Vagina (tissue), 2 donors: ENCODE measurements at regions of chr6 and their contacts with region 1.

Region 1: GRCh38 chr6:43769526-43770416 is at the start of gene VEGFA:
- DNase-seq: peak in 1 of 2 donors; percentile 95
- H3K4me3 ChIP-seq: peak within 1 kb of the TSS; percentile 66 to 77
- H3K27ac ChIP-seq: peak within 1 kb of the TSS; percentile 89
- H3K4me1 ChIP-seq: peaks cover 34% of the 10 kb centered on the region
- H3K27me3 ChIP-seq: no peaks in the 10 kb centered on the region
- CTCF ChIP-seq: peak; percentile 46 to 97 (median 95)
- POLR2A ChIP-seq: peak; percentile 43 to 93
- total RNA-seq, gene VEGFA: 194 TPM

Region 2: DNA sequence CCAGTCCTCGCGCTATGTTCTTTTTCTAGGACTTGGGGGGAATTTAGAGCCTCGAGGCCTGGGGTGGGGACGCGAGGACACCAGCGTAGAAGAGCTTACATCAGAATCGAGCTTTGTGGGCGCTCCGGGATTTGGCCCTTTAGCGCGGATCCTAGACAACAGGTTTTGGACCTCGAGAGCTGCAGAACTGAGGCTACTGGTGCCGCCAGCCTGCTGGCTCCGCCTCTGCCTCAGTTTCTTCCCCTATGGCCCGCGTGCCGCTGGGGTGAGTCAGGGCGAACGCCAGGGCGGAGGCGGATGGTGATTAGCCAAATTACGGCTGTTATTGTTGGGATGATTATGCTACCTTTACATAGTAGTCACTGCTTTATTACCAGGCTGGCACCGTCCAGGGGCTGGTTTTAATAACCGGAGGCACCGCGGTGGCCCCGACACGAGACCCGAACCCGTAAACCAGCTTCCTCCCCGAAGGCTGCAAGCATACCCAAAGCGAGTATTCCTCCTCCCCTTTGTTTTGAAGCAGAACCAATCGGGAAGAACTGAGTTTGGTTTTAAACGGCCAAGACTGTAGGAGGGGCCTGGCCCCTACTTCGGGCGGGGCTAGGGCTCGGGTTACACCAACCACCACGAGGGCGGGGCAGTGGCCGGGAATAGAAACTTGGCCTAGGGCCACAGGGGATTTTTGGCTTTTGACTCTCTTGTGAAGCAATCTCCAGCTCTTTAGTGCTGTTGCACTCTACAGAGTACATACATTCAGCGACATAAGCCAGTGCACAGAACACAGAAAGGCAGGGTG is 140.1 kb before region 1 on chr6:
- intact Hi-C with region 1: loop called (anchors 5 kb)
- DNase-seq: peak in 1 of 2 donors; percentile 98
- H3K4me3 ChIP-seq: peak overlapping the region; percentile 91 to 94
- H3K27ac ChIP-seq: peak overlapping the region; percentile 99
- H3K4me1 ChIP-seq: peaks cover 28% of the 10 kb centered on the region
- H3K27me3 ChIP-seq: no peaks in the 10 kb centered on the region
- CTCF ChIP-seq: no peak
- POLR2A ChIP-seq: peak in 1 of 2 donors; percentile 86

Region 3: GRCh38 chr6:43667245-43668150 is 102.3 kb before region 1 on chr6:
- intact Hi-C with region 1: loop called (anchors 5 kb)
- DNase-seq: no peak
- H3K4me3 ChIP-seq: peak overlapping the region in 1 of 2 donors; percentile 23
- H3K27ac ChIP-seq: peak overlapping the region; percentile 75
- H3K4me1 ChIP-seq: peaks cover 37% of the 10 kb centered on the region
- H3K27me3 ChIP-seq: no peaks in the 10 kb centered on the region
- CTCF ChIP-seq: peak; percentile 93 to 98 (median 97)
- POLR2A ChIP-seq: no peak

Region 4: GRCh38 chr6:43714311-43715055 is 55.3 kb before region 1 on chr6:
- intact Hi-C with region 1: loop called (anchors 10 kb)
- DNase-seq: peak in 1 of 2 donors; percentile 95
- H3K4me3 ChIP-seq: no peak overlapping the region
- H3K27ac ChIP-seq: peak overlapping the region; percentile 72
- H3K4me1 ChIP-seq: peaks cover 63% of the 10 kb centered on the region
- H3K27me3 ChIP-seq: no peaks in the 10 kb centered on the region
- CTCF ChIP-seq: no peak
- POLR2A ChIP-seq: no peak

Region 5: GRCh38 chr6:43916924-43917877 is 147.4 kb after region 1 on chr6:
- intact Hi-C with region 1: loop called (anchors 10 kb)
- DNase-seq: peak in 1 of 2 donors; percentile 98
- H3K4me3 ChIP-seq: no peak overlapping the region
- H3K27ac ChIP-seq: peak overlapping the region; percentile 53
- H3K4me1 ChIP-seq: peaks cover 22% of the 10 kb centered on the region
- H3K27me3 ChIP-seq: no peaks in the 10 kb centered on the region
- CTCF ChIP-seq: peak in 1 of 3 experiments; percentile 17
- POLR2A ChIP-seq: no peak

Region 6: GRCh38 chr6:44074439-44075136 is 304.8 kb after region 1 on chr6:
- intact Hi-C with region 1: loop called (anchors 1 kb)
- DNase-seq: no peak
- H3K4me3 ChIP-seq: no peak overlapping the region
- H3K27ac ChIP-seq: peak overlapping the region; percentile 84
- H3K4me1 ChIP-seq: peaks cover 62% of the 10 kb centered on the region
- H3K27me3 ChIP-seq: no peaks in the 10 kb centered on the region
- CTCF ChIP-seq: peak; percentile 72 to 90 (median 85)
- POLR2A ChIP-seq: no peak